Activated CD4-positive, alpha-beta memory T cell treated with anti-CD3 and anti-CD28 coated beads for 36 hours (primary cell): ENCODE measurements at regions of chr4 and their contacts with region 1.

Region 1: DNA sequence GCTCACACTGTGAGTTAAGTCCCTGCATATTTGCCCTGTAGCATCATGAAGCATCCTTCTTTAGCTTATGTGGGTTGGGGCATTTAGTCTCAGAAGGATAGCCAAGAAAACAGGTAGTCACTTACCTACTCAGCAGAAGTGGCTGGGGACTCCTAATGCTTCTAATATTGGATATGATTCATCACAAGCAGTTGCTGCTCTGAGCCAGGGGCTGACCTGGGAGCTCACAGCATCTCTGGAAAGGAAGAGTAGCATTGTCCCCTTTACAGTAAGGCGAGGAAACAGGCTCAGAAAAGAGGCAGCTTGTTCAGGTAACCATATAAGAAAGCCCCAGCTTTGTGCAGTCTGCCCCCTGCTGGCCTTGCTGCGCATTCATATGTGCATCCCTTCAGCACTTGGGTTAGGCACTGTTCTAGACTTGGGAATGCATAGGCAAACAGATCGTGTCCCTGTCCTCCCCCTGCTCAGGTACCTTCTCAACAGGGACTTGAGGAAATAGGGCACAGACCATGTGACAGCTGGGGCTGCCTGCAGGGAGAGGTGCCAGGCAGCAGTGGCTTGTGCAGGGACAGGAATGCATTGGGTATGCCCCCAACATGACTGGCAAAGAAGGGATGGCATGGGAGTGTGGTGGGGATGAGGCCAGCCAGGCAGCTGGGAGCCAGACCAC is 35.7 kb upstream of the TBC1D14 start:
- DNase-seq: peak; percentile 86
- H3K4me3 Mint-ChIP-seq: no peak overlapping the region
- H3K27ac Mint-ChIP-seq: no peak overlapping the region
- H3K4me1 Mint-ChIP-seq: no peaks in the 10 kb centered on the region
- H3K27me3 Mint-ChIP-seq: no peaks in the 10 kb centered on the region

Region 2: DNA sequence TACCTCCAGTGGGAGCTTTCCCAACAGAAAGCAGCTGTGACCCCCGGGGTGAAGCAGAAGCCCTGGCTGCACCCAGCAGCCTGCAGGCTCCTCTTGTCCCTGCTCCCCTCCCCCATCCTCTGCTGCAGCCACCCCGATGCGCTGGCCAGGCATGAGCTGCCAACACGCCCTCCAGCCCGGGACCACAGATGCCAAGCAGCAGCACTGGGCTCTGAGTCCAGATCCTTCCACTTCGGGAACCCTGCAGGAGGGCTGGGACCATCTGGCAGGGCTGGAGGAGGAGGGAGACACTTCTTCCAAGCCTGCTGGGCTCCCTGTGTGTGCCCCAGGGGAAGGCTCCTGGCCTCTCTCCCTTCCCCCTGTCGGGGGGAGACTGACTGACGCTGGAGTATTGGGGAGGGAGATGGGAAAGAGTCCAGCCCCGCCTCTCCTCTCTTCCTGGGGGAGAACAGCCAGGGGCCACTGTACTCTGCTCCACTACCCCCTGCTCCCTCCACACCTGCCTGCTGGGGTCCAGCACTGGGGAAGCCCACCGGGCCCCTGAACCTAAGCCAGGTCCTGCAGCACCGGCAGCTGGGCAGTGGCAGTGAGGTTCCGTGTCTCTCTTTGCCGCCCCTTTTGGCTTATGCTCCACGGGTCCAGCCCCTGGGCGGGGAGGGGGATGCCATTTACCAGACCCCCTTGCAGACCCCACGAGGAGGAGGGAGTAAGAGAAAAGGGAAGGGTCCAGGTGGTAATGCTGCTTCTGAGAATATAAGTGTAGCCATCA is 457.2 kb before region 1 on chr4:
- CTCF ChIA-PET with region 1: no interaction called
- POLR2A ChIA-PET with region 1: no interaction called
- intact Hi-C with region 1: no loop called
- DNase-seq: no peak
- H3K4me3 Mint-ChIP-seq: no peak overlapping the region
- H3K27ac Mint-ChIP-seq: no peak overlapping the region
- H3K4me1 Mint-ChIP-seq: no peaks in the 10 kb centered on the region
- H3K27me3 Mint-ChIP-seq: peaks cover 11% of the 10 kb centered on the region

Region 3: DNA sequence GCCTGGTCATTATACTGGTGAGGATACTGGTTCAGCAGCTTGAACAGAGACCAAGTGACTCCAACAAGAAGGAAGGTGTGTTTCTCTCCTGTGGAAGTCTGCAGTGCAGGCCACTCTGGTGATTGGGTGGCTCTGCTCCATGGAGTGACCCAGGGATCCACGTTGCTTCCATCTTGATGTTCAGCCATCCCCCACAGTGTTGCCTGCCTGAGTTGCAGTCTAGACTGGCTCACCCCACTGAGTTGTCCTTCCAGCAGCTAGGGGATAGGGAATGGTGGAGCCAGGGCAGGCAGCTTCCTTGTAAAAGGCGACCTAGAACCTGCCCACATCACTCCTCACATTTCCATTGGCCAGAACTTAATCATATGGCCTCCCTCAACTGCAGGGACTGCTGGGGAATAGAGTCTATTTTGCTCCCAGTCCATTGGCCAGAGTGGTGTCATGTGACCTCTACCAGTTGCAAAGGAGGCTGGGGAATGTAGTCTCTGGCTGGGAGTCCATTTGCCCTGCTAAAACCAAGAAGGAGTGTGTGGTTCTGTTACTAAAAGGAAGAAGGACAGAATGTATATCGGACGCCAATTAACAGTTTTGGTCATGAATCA is 290.9 kb before region 1 on chr4:
- CTCF ChIA-PET with region 1: no interaction called
- POLR2A ChIA-PET with region 1: no interaction called
- intact Hi-C with region 1: no loop called
- DNase-seq: peak; percentile 19
- H3K4me3 Mint-ChIP-seq: no peak overlapping the region
- H3K27ac Mint-ChIP-seq: no peak overlapping the region
- H3K4me1 Mint-ChIP-seq: no peaks in the 10 kb centered on the region
- H3K27me3 Mint-ChIP-seq: no peaks in the 10 kb centered on the region

Region 4: DNA sequence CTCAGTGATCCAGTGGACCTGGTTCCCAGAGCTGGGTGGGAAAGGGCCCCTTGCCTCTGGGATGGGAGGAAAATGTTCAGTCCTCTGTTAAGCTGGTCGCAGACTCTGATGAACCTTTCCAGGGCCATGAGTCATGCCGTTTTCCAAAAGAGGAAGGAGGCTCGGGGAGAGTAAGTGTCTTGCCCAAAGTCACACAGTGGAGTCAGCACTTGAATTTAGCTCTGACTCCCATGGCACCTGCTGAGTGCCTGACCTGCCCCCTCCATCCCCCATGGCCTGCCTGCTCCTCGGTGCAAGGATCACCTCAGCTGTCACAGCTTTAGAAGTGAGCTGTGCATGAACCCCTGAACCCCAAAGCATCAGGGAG is 105.4 kb before region 1 on chr4:
- CTCF ChIA-PET with region 1: interaction called, 19 read pairs
- POLR2A ChIA-PET with region 1: no interaction called
- intact Hi-C with region 1: no loop called
- DNase-seq: no peak
- H3K4me3 Mint-ChIP-seq: no peak overlapping the region
- H3K27ac Mint-ChIP-seq: no peak overlapping the region
- H3K4me1 Mint-ChIP-seq: peaks cover 12% of the 10 kb centered on the region
- H3K27me3 Mint-ChIP-seq: no peaks in the 10 kb centered on the region

Region 5: DNA sequence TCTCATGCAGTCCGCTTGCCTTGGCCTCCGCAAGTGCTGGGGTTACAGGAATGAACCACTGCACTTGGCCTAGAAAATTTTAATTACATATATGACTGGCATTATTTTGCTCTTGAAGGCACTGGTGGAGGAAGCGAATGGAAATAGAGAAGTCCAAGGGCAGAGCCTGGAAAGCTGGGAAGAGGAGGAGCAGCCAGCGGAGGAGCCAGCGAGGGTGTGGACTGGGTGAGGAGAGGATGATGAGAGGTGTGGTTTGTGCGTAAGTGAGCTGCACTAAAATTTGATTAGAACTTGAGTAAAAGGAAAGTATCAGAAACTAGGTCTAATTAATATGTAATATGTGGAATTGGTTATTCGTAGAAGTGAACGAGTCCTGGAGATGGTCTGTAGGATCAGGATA is 78.1 kb before region 1 on chr4:
- CTCF ChIA-PET with region 1: interaction called, 10 read pairs
- POLR2A ChIA-PET with region 1: no interaction called
- intact Hi-C with region 1: no loop called
- DNase-seq: no peak
- H3K4me3 Mint-ChIP-seq: no peak overlapping the region
- H3K27ac Mint-ChIP-seq: no peak overlapping the region
- H3K4me1 Mint-ChIP-seq: peaks cover 49% of the 10 kb centered on the region
- H3K27me3 Mint-ChIP-seq: no peaks in the 10 kb centered on the region

Region 6: DNA sequence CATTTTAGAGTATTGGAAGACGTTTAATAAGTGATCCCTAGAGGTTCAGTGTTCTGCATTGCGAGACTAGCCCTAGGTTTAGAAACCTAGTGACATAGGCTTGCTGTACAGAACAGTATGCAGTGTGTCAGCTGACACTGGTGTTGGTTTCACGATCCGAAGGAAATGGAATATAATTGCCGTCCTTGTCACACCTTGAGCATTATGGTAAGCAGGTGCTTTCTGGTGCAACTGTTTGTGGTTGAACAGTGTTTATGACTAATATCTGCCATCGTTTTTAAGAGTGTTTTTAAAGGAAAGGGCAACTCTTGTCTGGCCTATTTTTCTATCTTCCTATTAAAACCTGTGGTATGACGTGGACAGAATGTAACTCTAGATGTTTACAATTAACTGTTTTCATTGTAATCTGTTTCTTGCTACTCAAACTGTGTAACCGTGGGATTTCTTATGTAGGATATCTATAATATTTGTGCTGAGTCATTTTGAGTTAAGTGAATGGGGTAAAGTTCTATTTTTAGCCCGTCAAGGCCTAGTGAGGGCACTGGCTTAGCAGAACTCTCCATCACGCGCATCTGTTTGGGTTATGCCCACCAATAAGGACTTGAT is 18.1 kb before region 1 on chr4:
- CTCF ChIA-PET with region 1: interaction called, 23 read pairs
- POLR2A ChIA-PET with region 1: interaction called, 3 read pairs
- intact Hi-C with region 1: no loop called
- DNase-seq: peak; percentile 59
- H3K4me3 Mint-ChIP-seq: peak overlapping the region; percentile 36
- H3K27ac Mint-ChIP-seq: peak overlapping the region; percentile 90
- H3K4me1 Mint-ChIP-seq: peaks cover 35% of the 10 kb centered on the region
- H3K27me3 Mint-ChIP-seq: no peaks in the 10 kb centered on the region

Region 7: GRCh38 chr4:6898763-6899162 is 24.8 kb after region 1 on chr4:
- CTCF ChIA-PET with region 1: interaction called, 30 read pairs
- POLR2A ChIA-PET with region 1: no interaction called
- intact Hi-C with region 1: no loop called
- DNase-seq: no peak
- H3K4me3 Mint-ChIP-seq: no peak overlapping the region
- H3K27ac Mint-ChIP-seq: peak overlapping the region; percentile 82
- H3K4me1 Mint-ChIP-seq: peaks cover 29% of the 10 kb centered on the region
- H3K27me3 Mint-ChIP-seq: no peaks in the 10 kb centered on the region